H1 (cell line): ENCODE measurements at regions of chr9 and their contacts with region 1.

Region 1: DNA sequence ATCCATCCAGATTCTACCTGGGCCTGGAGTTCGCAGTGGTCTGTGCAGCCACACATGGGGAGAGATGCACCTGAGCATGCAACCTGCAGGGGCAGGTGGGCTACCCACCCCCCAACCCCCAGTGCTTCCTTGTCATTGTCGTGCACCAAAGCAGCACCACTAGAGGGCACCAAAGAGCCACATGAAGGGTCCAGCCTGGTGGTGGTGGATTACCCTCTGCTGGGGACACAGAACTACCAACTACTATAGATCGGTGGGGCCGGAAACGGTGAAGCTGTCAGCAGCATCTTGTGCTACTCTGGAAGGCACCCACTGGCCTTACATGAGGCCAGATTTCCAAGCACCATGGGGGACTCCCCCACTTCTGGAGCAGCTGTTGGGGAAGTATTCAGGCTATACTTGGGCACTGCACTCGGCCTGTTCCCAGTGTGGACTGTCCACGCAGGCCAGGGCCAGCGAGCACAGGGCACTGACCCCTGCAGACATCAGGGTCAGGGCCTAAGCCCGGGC is 60.2 kb upstream of the TBC1D2 start:
- DNase-seq: peak; percentile 72 to 97
- H3K4me3 ChIP-seq: no peak overlapping the region
- H3K27ac ChIP-seq: no peak overlapping the region
- H3K4me1 ChIP-seq: peaks cover 0 to 9% (median 7%) of the 10 kb centered on the region in 4 experiments; a peak in 5 of 7 replicates
- H3K27me3 ChIP-seq: no peaks in the 10 kb centered on the region
- CTCF ChIP-seq: peak; percentile 87 to 99 (median 99)
- EP300 ChIP-seq: peak in 1 of 2 experiments; percentile 47; a peak in 1 of 3 replicates
- POLR2A ChIP-seq: no peak
- RAD21 ChIP-seq: peak; percentile 99 to 100

Region 2: DNA sequence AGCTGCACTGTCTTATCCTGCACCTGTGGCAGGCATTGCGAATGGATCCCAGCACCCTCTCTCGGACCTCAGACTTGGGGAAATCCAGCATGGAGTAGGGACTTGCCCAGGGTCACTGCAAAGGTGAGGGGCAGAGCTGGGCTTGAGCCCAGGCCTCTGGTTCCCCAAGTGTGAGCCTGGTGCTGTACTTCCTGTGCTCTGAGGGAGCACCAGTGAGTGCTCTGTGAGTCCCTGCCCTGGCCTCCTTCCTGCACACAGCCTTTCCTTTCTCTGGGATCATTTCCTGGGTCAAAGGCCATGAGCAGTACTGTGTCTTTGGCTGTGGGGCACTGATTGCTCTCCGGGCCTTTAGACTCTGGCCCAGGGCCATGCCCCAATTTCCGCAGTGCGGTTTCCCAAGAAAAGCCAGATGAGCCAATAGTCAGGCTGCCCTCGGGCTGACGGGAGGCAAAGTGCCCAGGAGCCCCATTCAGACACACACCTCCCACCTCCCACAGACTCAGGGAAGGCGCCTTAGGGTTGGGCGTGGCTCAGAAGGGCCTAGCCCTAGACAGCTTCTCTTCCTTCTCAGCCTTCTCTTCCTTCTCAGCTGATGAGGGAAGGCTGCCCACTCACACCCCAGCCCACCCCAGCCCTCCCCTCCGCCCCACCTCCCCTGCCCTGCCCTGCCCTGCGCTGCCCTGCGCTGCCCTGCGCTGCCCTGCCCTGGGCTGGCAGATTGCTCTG is 173.3 kb before region 1 on chr9:
- CTCF ChIA-PET with region 1: no interaction called
- POLR2A ChIA-PET with region 1: no interaction called
- DNase-seq: no peak
- H3K4me3 ChIP-seq: no peak overlapping the region
- H3K27ac ChIP-seq: no peak overlapping the region
- H3K4me1 ChIP-seq: peaks cover 0 to 3% (median 0%) of the 10 kb centered on the region in 4 experiments; a peak in 2 of 7 replicates
- H3K27me3 ChIP-seq: no peaks in the 10 kb centered on the region
- CTCF ChIP-seq: no peak
- EP300 ChIP-seq: no peak
- POLR2A ChIP-seq: no peak
- RAD21 ChIP-seq: no peak

Region 3: DNA sequence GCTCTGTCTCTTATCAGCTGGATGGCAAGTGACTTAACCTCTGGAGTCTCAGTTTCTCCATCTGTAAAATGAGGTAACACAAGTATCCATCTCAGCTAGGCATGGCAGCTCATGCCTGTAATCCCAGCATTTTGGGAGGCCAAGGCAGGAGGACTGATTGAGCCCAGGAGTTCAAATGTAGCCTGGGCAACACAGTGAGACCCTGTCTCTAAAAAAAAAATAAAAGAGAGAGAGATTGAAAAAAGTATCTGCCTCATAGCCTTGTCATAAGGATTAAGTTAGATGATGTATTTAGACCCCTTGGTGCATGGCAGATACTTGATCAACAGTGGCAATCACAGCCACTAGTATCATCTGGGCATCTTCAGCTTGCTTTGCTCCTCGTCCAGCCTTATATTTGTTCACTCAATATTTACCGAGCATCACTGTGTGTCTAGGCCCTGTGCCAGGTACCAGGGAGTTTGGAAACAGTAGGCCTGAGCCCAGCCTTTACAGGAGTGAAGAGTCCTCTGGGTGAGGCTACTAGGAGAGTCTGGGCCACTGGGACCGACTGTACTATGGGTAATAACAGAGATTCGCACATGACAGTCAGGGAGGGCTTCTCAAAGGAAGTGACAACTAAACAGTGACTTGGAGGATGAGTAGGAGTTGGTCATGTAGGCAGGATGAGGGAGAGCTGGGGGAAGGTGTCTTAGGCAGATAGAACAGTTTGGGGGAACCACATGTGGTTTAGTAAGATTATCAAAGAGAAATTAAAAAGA is 157.4 kb before region 1 on chr9:
- CTCF ChIA-PET with region 1: no interaction called
- POLR2A ChIA-PET with region 1: no interaction called
- DNase-seq: no peak
- H3K4me3 ChIP-seq: no peak overlapping the region
- H3K27ac ChIP-seq: no peak overlapping the region
- H3K4me1 ChIP-seq: no peaks in the 10 kb centered on the region; a peak in 1 of 7 replicates
- H3K27me3 ChIP-seq: peaks cover 0 to 2% (median 0%) of the 10 kb centered on the region in 4 experiments; a peak in 1 of 7 replicates
- CTCF ChIP-seq: no peak
- EP300 ChIP-seq: no peak
- POLR2A ChIP-seq: no peak
- RAD21 ChIP-seq: no peak

Region 4: GRCh38 chr9:98226957-98227356 is 88.6 kb before region 1 on chr9:
- CTCF ChIA-PET with region 1: no interaction called
- POLR2A ChIA-PET with region 1: no interaction called
- DNase-seq: no peak
- H3K4me3 ChIP-seq: no peak overlapping the region
- H3K27ac ChIP-seq: no peak overlapping the region
- H3K4me1 ChIP-seq: no peaks in the 10 kb centered on the region
- H3K27me3 ChIP-seq: no peaks in the 10 kb centered on the region
- CTCF ChIP-seq: no peak
- EP300 ChIP-seq: no peak
- POLR2A ChIP-seq: no peak
- RAD21 ChIP-seq: no peak

Region 5: GRCh38 chr9:98241357-98242300 is 74.0 kb before region 1 on chr9:
- CTCF ChIA-PET with region 1: no interaction called
- POLR2A ChIA-PET with region 1: no interaction called
- DNase-seq: no peak
- H3K4me3 ChIP-seq: no peak overlapping the region
- H3K27ac ChIP-seq: no peak overlapping the region
- H3K4me1 ChIP-seq: peaks cover 0 to 3% (median 2%) of the 10 kb centered on the region in 4 experiments; a peak in 3 of 7 replicates
- H3K27me3 ChIP-seq: no peaks in the 10 kb centered on the region
- CTCF ChIP-seq: peak in 2 of 3 experiments; percentile 33 to 59; a peak in 2 of 4 replicates
- EP300 ChIP-seq: no peak
- POLR2A ChIP-seq: no peak
- RAD21 ChIP-seq: peak; percentile 49 to 58

Region 6: GRCh38 chr9:98288881-98289280 is 26.7 kb before region 1 on chr9:
- CTCF ChIA-PET with region 1: interaction called, 10 read pairs
- POLR2A ChIA-PET with region 1: no interaction called
- DNase-seq: no peak
- H3K4me3 ChIP-seq: no peak overlapping the region
- H3K27ac ChIP-seq: no peak overlapping the region
- H3K4me1 ChIP-seq: no peaks in the 10 kb centered on the region
- H3K27me3 ChIP-seq: peaks cover 0 to 2% (median 0%) of the 10 kb centered on the region in 4 experiments; a peak in 2 of 7 replicates
- CTCF ChIP-seq: no peak
- EP300 ChIP-seq: no peak
- POLR2A ChIP-seq: no peak
- RAD21 ChIP-seq: no peak

Region 7: GRCh38 chr9:98326459-98327248 is 11.0 kb after region 1 on chr9:
- CTCF ChIA-PET with region 1: interaction called, 17 read pairs
- POLR2A ChIA-PET with region 1: no interaction called
- DNase-seq: no peak
- H3K4me3 ChIP-seq: no peak overlapping the region
- H3K27ac ChIP-seq: no peak overlapping the region
- H3K4me1 ChIP-seq: no peaks in the 10 kb centered on the region
- H3K27me3 ChIP-seq: no peaks in the 10 kb centered on the region
- CTCF ChIP-seq: no peak
- EP300 ChIP-seq: no peak
- POLR2A ChIP-seq: no peak
- RAD21 ChIP-seq: no peak

Region 8: GRCh38 chr9:98455256-98456155 is 139.9 kb after region 1 on chr9:
- CTCF ChIA-PET with region 1: interaction called, 11 read pairs
- POLR2A ChIA-PET with region 1: no interaction called
- DNase-seq: no peak
- H3K4me3 ChIP-seq: no peak overlapping the region
- H3K27ac ChIP-seq: no peak overlapping the region
- H3K4me1 ChIP-seq: no peaks in the 10 kb centered on the region; a peak in 1 of 7 replicates
- H3K27me3 ChIP-seq: no peaks in the 10 kb centered on the region; a peak in 1 of 7 replicates
- CTCF ChIP-seq: no peak
- EP300 ChIP-seq: no peak
- POLR2A ChIP-seq: no peak
- RAD21 ChIP-seq: no peak

Region 9: DNA sequence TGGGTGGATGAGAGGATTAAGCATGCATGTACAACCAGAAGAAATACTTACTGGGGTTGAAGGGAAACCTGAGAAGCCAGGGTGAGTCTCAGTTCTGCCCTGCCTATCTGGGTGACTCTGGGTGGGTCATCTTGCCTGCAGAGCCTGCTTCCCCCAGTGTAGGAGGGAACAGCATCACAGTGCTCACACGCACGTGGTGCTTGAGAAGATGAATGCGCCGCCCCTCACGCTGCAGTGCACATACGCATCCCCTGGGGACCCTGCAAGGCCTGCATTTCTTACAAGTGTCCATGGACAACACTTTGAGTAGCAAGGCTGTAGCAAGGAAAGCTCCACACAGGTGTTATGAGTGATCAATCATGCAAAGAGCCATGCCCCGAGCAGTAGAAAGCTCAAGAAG is 411.8 kb after region 1 on chr9:
- CTCF ChIA-PET with region 1: interaction called, 11 read pairs
- POLR2A ChIA-PET with region 1: no interaction called
- DNase-seq: no peak
- H3K4me3 ChIP-seq: no peak overlapping the region
- H3K27ac ChIP-seq: no peak overlapping the region
- H3K4me1 ChIP-seq: peaks cover 0 to 3% (median 0%) of the 10 kb centered on the region in 4 experiments; a peak in 2 of 7 replicates
- H3K27me3 ChIP-seq: peaks cover 0 to 7% (median 0%) of the 10 kb centered on the region in 4 experiments; a peak in 4 of 7 replicates
- CTCF ChIP-seq: no peak
- EP300 ChIP-seq: no peak
- POLR2A ChIP-seq: no peak
- RAD21 ChIP-seq: no peak